A673 (cell line): ENCODE measurements at regions of chr12 and their contacts with region 1.

Region 1: DNA sequence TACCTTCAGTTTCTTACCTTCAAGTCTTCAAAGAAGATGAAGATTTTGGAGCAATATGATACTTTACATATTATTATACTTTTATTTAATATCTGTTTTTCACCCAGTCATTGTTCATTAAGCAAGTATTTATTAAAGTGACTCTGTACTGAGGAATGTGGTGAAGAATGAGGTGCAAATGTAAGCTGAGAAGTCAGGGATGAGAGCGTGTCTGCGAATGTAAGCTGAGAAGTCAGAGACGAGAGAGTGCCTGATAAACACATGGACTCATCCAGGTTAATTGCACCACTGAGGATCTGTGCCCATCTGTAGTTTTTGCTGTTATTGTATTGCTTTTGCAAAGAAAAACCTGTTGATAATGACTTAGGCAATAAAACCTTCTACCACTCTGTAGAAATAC is 211.9 kb upstream of the FAR2 start:
- DNase-seq: no peak
- H3K4me3 ChIP-seq: no peak overlapping the region
- H3K27ac ChIP-seq: no peak overlapping the region
- H3K4me1 ChIP-seq: no peaks in the 10 kb centered on the region
- H3K27me3 ChIP-seq: no peaks in the 10 kb centered on the region
- CTCF ChIP-seq: no peak

Region 2: DNA sequence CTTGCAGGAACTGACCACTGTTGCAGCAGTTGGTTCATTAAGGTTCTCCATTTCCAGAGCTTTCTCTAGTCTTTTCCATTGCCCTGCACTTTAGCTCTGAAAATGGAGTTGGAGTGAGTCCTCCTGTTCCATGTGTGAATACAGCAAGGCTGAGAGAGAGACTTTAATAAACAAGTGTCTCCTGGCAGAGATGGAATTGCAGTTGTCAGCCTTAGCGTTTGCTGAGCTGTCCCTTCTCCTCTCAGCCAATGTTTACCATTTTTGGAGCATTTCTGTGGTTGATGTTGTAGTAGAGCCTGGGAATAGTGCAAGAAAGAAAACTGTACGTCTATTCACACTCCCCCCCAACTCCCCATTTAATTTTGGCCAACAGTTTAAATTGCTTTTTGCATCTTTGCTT is 1149.6 kb before region 1 on chr12:
- CTCF ChIA-PET with region 1: no interaction called
- POLR2A ChIA-PET with region 1: interaction called, 10 read pairs
- intact Hi-C with region 1: no loop called
- DNase-seq: no peak
- H3K4me3 ChIP-seq: no peak overlapping the region
- H3K27ac ChIP-seq: no peak overlapping the region
- H3K4me1 ChIP-seq: peaks cover 22% of the 10 kb centered on the region
- H3K27me3 ChIP-seq: no peaks in the 10 kb centered on the region
- CTCF ChIP-seq: no peak